Activated naive CD4-positive, alpha-beta T cell treated with anti-CD3 and anti-CD28 coated beads for 36 hours (primary cell): ENCODE measurements at regions of chrX and their contacts with region 1.

Region 1: GRCh38 chrX:65534450-65535292 is at the start of gene LAS1L:
- DNase-seq: peak; percentile 93
- H3K4me3 Mint-ChIP-seq: peak within 1 kb of the TSS; percentile 96
- H3K27ac Mint-ChIP-seq: peak within 1 kb of the TSS; percentile 89
- H3K4me1 Mint-ChIP-seq: peaks cover 16% of the 10 kb centered on the region
- H3K27me3 Mint-ChIP-seq: no peaks in the 10 kb centered on the region
- total RNA-seq, gene LAS1L: 60.4 to 61.1 TPM

Region 2: GRCh38 chrX:63754860-63755582 is 1779.7 kb before region 1 on chrX:
- CTCF ChIA-PET with region 1: no interaction called
- intact Hi-C with region 1: loop called (anchors 10 kb)
- DNase-seq: peak; percentile 90
- H3K4me3 Mint-ChIP-seq: peak overlapping the region; percentile 90
- H3K27ac Mint-ChIP-seq: peak overlapping the region; percentile 96
- H3K4me1 Mint-ChIP-seq: peaks cover 29% of the 10 kb centered on the region
- H3K27me3 Mint-ChIP-seq: no peaks in the 10 kb centered on the region

Region 3: DNA sequence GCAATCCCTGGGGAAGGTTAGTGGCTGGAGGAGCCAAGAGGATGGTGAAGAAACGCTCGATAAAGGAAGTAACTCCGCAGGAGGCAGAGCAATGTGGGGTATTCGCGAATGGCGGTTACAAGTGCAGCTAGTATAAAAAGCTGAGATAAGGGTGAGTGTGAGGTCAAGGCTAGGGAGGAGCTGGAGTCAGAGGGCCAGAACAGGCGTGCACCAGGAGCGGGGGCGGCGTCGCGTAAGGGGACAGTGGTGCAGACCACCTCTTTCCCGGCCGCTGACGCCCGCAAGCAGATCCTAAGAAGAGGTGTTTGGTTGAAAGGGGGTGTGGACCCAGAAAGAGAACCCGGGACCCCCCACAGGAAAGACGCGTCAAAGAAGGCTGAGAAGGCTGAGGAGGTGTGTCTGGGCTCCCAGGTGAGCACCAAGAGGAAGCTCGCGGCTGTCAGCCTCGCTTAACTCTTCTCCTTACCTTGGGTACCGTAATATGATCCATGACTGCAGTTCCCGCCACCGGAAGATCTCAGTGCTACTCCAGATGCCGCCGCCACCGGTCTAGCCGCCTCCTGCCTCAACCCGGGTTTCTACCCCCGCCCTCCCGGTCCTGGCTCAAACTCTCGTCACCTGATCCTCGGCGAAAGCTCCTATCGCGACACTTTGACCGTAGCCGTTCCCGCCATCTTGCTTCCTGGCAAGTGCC is 1139.7 kb before region 1 on chrX and contains the start of gene MTMR8:
- CTCF ChIA-PET with region 1: no interaction called
- intact Hi-C with region 1: loop called (anchors 2 kb)
- DNase-seq: peak; percentile 88
- H3K4me3 Mint-ChIP-seq: peak within 1 kb of the TSS; percentile 89
- H3K27ac Mint-ChIP-seq: peak within 1 kb of the TSS; percentile 75
- H3K4me1 Mint-ChIP-seq: peaks cover 17% of the 10 kb centered on the region
- H3K27me3 Mint-ChIP-seq: no peaks in the 10 kb centered on the region
- total RNA-seq, gene MTMR8: 3.5 to 6.4 TPM

Region 4: GRCh38 chrX:65488501-65488900 is 46.2 kb before region 1 on chrX:
- CTCF ChIA-PET with region 1: no interaction called
- intact Hi-C with region 1: no loop called
- DNase-seq: no peak
- H3K4me3 Mint-ChIP-seq: no peak overlapping the region
- H3K27ac Mint-ChIP-seq: no peak overlapping the region
- H3K4me1 Mint-ChIP-seq: no peaks in the 10 kb centered on the region
- H3K27me3 Mint-ChIP-seq: no peaks in the 10 kb centered on the region